AG04449 (cell line): ENCODE measurements at regions of chr5 and their contacts with region 1.

Region 1: GRCh38 chr5:65102828-65103711 is 334.3 kb downstream of the CWC27 start:
- DNase-seq: no peak
- H3K4me3 ChIP-seq: peak overlapping the region; percentile 34
- CTCF ChIP-seq: peak; percentile 9

Region 2: DNA sequence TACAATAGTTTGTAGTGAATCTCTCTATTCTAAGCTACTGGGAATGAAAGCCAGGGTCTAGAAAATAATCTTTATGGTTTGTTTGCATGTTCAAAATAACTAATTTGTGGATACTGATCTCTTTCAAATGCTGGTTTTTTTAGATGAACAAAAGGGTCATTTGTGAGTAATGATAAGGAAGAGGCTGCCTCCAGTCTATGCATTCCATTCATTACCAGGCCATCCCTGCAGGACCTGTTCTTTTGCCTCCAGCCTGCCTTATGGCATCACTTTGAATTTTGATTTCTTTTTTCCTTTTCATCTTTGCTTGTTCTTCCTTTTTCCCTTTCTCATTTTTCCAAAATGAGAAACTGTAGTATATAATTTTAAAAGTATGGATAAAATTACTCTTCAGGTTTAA is 22.0 kb before region 1 on chr5:
- CTCF ChIA-PET with region 1: interaction called, 16 read pairs
- POLR2A ChIA-PET with region 1: no interaction called
- DNase-seq: no peak
- H3K4me3 ChIP-seq: no peak overlapping the region
- CTCF ChIP-seq: no peak

Region 3: GRCh38 chr5:65086234-65086890 is 16.7 kb before region 1 on chr5:
- CTCF ChIA-PET with region 1: interaction called, 16 read pairs
- POLR2A ChIA-PET with region 1: no interaction called
- DNase-seq: no peak
- H3K4me3 ChIP-seq: no peak overlapping the region
- CTCF ChIP-seq: no peak

Region 4: DNA sequence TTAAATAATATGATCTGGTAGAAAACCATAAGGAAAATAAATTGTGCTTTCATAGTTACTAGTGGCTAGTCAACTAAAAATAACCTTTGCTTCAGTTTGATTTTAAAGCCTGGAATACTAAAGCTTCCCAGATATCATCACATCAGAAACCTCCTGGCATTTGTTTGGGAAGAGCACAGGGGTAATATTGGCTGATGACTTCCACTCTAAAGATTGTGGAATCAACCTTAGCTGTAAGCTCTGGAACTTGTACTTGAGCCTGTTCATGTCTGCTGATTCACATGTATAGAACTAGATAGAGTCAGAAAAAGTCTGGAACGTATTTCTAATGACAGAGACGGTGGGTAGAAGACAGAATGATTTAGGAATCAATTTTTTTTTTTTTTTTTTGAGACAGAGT is 10.7 kb after region 1 on chr5:
- CTCF ChIA-PET with region 1: interaction called, 17 read pairs
- POLR2A ChIA-PET with region 1: interaction called, 3 read pairs
- DNase-seq: no peak
- H3K4me3 ChIP-seq: no peak overlapping the region
- CTCF ChIP-seq: no peak

Region 5: DNA sequence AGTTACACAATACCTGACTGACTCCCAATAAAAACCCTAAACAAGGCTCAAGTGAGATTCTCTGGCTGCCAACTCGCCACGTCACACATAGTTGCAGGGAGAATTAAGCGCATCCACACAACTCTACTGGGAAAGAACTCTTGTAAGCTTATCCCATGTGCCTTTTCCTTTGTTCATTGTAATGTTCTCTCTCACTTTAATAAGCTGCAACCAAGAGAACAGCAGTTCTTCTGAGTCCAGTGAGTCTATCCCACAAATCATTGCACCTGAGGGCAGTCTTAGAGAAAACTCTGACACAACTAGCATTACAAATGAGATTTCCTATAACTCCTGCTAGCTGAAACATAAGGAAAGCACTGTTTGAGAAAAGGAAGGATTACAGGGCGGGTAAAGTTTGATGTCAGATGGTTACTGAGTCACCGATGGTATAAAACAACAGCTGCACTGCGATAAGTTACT is 432.5 kb after region 1 on chr5:
- CTCF ChIA-PET with region 1: no interaction called
- POLR2A ChIA-PET with region 1: no interaction called
- DNase-seq: no peak
- H3K4me3 ChIP-seq: no peak overlapping the region
- CTCF ChIP-seq: no peak